Activated CD4-positive, alpha-beta memory T cell treated with anti-CD3 and anti-CD28 coated beads for 36 hours (primary cell): ENCODE measurements at regions of chr12 and their contacts with region 1.

Region 1: GRCh38 chr12:2783936-2784600 is 10.7 kb upstream of the FKBP4 start:
- DNase-seq: peak; percentile 58
- H3K4me3 Mint-ChIP-seq: peak overlapping the region; percentile 48
- H3K27ac Mint-ChIP-seq: no peak overlapping the region
- H3K4me1 Mint-ChIP-seq: peaks cover 10% of the 10 kb centered on the region
- H3K27me3 Mint-ChIP-seq: peaks cover 10% of the 10 kb centered on the region

Region 2: DNA sequence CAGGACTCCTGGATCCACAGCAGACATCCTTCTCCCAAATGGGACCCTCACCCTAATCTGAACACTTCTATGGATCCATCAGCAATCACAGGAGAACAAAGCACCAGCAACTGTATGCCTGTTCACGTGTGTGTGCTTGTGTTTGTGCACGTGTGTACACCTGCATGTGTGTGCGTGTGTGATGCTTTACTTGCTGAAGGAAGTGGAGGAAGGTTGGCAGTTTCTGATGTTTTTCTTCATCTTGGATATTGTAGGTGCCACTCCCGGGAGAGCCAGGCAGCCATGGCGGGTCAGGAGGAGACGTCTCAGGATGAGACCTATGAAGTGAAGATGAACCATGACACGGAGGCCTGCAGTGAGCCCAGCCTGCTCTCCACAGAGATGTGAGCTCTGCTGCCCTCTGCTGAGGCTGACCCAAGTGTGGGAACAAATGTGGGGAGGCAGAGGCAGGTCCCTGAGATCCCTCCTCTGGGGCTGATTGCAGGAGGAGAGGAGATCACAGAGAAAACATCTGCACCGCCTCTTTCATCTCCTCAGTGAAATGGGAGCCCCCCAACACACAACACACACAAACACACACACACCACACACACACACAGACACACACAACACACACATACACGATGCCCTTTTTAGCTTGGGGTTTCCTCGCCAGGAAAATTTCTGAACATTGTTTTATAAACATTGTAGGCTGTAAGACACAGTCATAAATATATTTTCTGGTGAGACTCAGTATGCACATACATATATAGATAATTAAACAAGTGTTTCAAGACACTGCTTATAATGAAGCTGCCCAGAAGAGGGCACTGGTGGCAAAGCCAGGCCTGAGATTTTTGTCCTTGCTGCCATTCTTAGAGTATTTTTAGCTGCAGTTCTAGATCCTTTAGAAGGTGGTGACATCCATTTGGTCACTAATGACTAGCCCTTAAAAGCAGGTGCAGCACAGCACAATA is 101.5 kb before region 1 on chr12:
- CTCF ChIA-PET with region 1: interaction called, 52 read pairs
- POLR2A ChIA-PET with region 1: no interaction called
- intact Hi-C with region 1: loop called (anchors 1 kb)
- DNase-seq: peak; percentile 63
- H3K4me3 Mint-ChIP-seq: no peak overlapping the region
- H3K27ac Mint-ChIP-seq: peak overlapping the region; percentile 44
- H3K4me1 Mint-ChIP-seq: peaks cover 9% of the 10 kb centered on the region
- H3K27me3 Mint-ChIP-seq: no peaks in the 10 kb centered on the region

Region 3: DNA sequence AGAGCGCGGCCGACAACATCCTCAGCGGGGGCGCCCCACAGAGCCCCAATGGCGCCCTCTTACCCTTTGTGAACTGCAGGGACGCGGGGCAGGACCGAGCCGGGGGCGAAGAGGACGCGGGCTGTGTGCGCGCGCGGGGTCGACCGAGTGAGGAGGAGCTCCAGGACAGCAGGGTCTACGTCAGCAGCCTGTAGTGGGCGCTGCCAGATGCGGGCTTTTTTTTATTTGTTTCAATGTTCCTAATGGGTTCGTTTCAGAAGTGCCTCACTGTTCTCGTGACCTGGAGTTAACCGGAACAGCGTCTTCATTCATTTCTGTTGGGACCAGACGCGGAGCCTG is 93.1 kb before region 1 on chr12:
- CTCF ChIA-PET with region 1: interaction called, 24 read pairs
- POLR2A ChIA-PET with region 1: interaction called, 4 read pairs
- intact Hi-C with region 1: no loop called
- DNase-seq: peak; percentile 76
- H3K4me3 Mint-ChIP-seq: peak overlapping the region; percentile 81
- H3K27ac Mint-ChIP-seq: peak overlapping the region; percentile 84
- H3K4me1 Mint-ChIP-seq: peaks cover 19% of the 10 kb centered on the region
- H3K27me3 Mint-ChIP-seq: peaks cover 6% of the 10 kb centered on the region

Region 4: GRCh38 chr12:2794736-2795289 is 10.7 kb after region 1 on chr12 and contains the start of gene FKBP4:
- CTCF ChIA-PET with region 1: interaction called, 20 read pairs
- POLR2A ChIA-PET with region 1: no interaction called
- intact Hi-C with region 1: no loop called
- DNase-seq: peak; percentile 93
- H3K4me3 Mint-ChIP-seq: peak within 1 kb of the TSS; percentile 91
- H3K27ac Mint-ChIP-seq: peak within 1 kb of the TSS; percentile 23
- H3K4me1 Mint-ChIP-seq: peaks cover 22% of the 10 kb centered on the region
- H3K27me3 Mint-ChIP-seq: no peaks in the 10 kb centered on the region
- total RNA-seq, gene FKBP4: 144 to 153 TPM